GM10248 (cell line): ENCODE measurements at regions of chr15 and their contacts with region 1.

Region 1: DNA sequence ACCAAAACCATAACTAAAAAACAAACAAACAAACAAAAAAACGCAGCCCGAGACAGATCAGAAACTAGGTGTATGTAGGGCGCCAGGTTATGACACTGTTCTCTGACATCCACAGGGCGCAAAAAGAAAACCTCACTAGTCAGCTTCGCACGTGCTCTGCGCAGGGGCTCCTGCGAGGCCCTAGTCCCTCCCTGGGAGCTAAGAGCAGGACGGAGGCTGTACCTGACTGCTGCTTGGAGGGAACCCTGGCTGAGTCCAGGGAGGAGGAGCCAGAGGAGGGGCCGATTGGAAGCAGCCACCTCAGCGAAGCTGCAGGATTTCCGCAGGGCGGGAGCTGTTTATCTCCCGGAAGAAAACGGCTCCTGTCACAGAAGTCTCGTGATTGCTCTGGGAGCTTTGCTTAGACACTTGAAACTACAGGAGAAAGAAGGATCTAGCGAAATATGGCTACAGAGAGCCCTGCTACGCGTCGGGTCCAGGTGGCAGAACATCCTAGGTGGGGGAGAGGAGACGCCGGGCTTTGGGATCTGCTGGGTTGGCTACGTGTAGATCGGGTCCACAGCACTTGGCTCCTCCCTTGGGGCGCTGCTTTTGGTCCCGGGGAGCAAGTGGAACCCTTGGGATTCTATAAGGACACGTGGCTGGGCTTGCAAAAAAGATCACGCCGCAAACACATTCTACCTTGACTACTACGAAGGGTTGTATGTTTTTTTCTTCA is at the start of gene GALK2:
- DNase-seq: peak; percentile 77
- CTCF ChIP-seq: no peak

Region 2: DNA sequence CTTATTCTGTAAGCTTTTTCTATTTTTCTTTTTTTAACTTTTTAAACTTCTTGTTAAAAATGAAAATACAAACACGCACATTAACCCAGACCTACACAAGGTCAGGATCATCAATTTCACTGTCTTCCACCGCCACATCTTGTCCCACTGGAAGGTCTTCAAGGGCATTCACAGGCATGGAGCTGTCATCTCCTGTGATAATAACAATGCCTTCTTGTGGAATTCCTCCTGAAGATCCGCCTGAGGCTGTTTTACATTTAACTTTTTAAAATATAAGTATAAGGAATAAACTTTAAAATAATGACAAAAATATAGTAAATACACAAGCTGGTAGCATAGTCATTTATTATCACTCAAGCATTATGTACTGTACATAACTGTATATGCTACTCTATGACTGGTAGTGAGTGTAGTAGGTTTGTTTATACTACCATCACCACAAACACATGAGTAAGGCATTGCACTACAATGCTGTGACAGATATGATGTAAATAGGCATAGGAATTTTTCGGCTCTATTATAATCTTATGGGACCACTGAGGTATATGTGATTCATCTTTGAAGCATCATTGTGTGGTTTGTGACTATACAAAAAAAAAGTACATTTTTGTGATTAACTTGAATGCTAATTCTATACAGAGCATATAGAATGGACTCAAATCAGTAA is 489.3 kb before region 1 on chr15:
- CTCF ChIA-PET with region 1: no interaction called
- POLR2A ChIA-PET with region 1: interaction called, 11 read pairs
- DNase-seq: no peak
- CTCF ChIP-seq: no peak

Region 3: GRCh38 chr15:49155110-49155833 is 14.8 kb before region 1 on chr15 and contains the start of gene COPS2:
- CTCF ChIA-PET with region 1: interaction called, 5 read pairs
- POLR2A ChIA-PET with region 1: interaction called, 10 read pairs
- DNase-seq: peak; percentile 88
- CTCF ChIP-seq: no peak